ENCODE measurements at regions of chr1 and their contacts with region 1.

Region 1: GRCh38 chr1:210407207-210407886 is 78.6 kb downstream of the HHAT start:
- DNase-seq: peak; percentile 62
- ATAC-seq: peak; percentile 68
- H3K4me3 Mint-ChIP-seq: no peak overlapping the region
- H3K27ac Mint-ChIP-seq: no peak overlapping the region
- H3K4me1 Mint-ChIP-seq: peaks cover 4% of the 10 kb centered on the region
- H3K27me3 Mint-ChIP-seq: no peaks in the 10 kb centered on the region
- CTCF ChIP-seq: peak; percentile 98

Region 2: DNA sequence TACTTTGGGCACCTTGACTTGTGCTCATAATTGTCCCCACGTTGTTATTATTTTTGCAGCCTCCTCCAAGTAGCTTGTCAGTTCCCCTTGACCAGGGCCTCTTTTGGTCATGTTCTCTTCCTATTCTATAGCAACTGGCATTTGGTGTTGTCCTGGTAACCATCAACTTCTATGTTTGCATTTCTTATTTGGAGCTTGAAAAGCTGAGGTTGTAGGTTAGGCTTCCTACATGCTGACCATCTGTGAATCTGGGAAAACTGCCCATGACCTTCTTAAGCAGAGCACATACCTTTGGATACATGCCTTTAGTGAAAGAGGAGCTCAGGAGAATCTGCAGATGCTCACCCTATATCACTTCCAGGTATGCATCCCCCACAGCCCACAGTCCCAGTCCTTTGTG is 82.1 kb after region 1 on chr1:
- CTCF ChIA-PET with region 1: no interaction called
- POLR2A ChIA-PET with region 1: no interaction called
- intact Hi-C with region 1: no loop called
- DNase-seq: no peak
- ATAC-seq: no peak
- H3K4me3 Mint-ChIP-seq: no peak overlapping the region
- H3K27ac Mint-ChIP-seq: no peak overlapping the region
- H3K4me1 Mint-ChIP-seq: no peaks in the 10 kb centered on the region
- H3K27me3 Mint-ChIP-seq: no peaks in the 10 kb centered on the region
- CTCF ChIP-seq: no peak

Region 3: GRCh38 chr1:210584439-210585113 is 177.2 kb after region 1 on chr1:
- CTCF ChIA-PET with region 1: no interaction called
- POLR2A ChIA-PET with region 1: no interaction called
- intact Hi-C with region 1: loop called (anchors 5 kb)
- DNase-seq: peak; percentile 34
- ATAC-seq: peak; percentile 37
- H3K4me3 Mint-ChIP-seq: no peak overlapping the region
- H3K27ac Mint-ChIP-seq: no peak overlapping the region
- H3K4me1 Mint-ChIP-seq: peaks cover 10% of the 10 kb centered on the region
- H3K27me3 Mint-ChIP-seq: no peaks in the 10 kb centered on the region
- CTCF ChIP-seq: no peak

Region 4: DNA sequence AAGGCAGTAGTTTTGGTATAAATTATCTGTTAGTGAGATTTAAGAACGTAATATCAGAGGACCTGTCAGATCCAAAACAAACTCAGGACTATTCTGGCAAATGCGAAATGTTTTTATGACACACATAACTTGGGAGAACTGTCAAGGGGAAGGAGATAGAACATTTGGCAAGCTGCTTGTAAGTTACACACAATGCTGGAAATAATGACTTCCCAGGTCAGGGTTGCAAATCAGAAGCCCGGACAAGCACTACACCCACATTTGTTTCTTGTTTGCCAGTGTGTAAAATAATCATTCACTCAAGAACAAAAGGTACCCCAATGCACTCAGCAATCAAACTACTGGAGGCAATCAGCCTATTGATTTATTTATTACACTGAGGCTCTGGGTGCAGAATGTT is 371.9 kb after region 1 on chr1:
- CTCF ChIA-PET with region 1: no interaction called
- POLR2A ChIA-PET with region 1: no interaction called
- intact Hi-C with region 1: no loop called
- DNase-seq: no peak
- ATAC-seq: no peak
- H3K4me3 Mint-ChIP-seq: no peak overlapping the region
- H3K27ac Mint-ChIP-seq: no peak overlapping the region
- H3K4me1 Mint-ChIP-seq: no peaks in the 10 kb centered on the region
- H3K27me3 Mint-ChIP-seq: peaks cover 2% of the 10 kb centered on the region
- CTCF ChIP-seq: no peak

Region 5: DNA sequence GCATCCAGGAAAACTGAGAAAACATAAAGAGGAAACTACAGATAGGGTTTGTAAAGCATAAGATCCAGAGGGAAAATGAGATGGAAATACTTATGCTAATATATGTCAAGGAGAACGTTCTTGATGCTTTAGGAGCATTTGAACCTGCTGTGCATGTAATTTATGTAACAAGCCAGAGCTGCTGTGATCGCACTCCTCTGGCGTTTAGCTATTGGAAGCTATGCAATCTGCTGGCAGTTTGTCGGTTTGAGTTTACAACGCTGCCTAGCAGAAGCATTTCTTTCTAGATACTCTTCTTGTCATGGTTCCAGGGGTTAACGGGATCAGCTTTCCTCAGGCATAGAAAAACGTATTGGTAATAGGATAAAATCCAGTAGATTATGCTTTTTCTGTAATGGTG is 543.9 kb after region 1 on chr1:
- CTCF ChIA-PET with region 1: no interaction called
- POLR2A ChIA-PET with region 1: no interaction called
- intact Hi-C with region 1: loop called (anchors 2 kb)
- DNase-seq: no peak
- ATAC-seq: no peak
- H3K4me3 Mint-ChIP-seq: no peak overlapping the region
- H3K27ac Mint-ChIP-seq: no peak overlapping the region
- H3K4me1 Mint-ChIP-seq: no peaks in the 10 kb centered on the region
- H3K27me3 Mint-ChIP-seq: no peaks in the 10 kb centered on the region
- CTCF ChIP-seq: no peak

Region 6: GRCh38 chr1:211133836-211134669 is 726.7 kb after region 1 on chr1 and contains the start of gene KCNH1:
- CTCF ChIA-PET with region 1: interaction called, 9 read pairs
- POLR2A ChIA-PET with region 1: no interaction called
- intact Hi-C with region 1: loop called (anchors 1 kb)
- DNase-seq: peak; percentile 59
- ATAC-seq: peak; percentile 87
- H3K4me3 Mint-ChIP-seq: peak within 1 kb of the TSS; percentile 67
- H3K27ac Mint-ChIP-seq: no peak within 1 kb of the TSS
- H3K4me1 Mint-ChIP-seq: peaks cover 7% of the 10 kb centered on the region
- H3K27me3 Mint-ChIP-seq: peaks cover 55% of the 10 kb centered on the region
- CTCF ChIP-seq: no peak
- total RNA-seq, gene KCNH1: not detected in 2 replicates

Region 7: GRCh38 chr1:211352985-211353515 is 945.7 kb after region 1 on chr1:
- CTCF ChIA-PET with region 1: no interaction called
- POLR2A ChIA-PET with region 1: no interaction called
- intact Hi-C with region 1: loop called (anchors 1 kb)
- DNase-seq: no peak
- ATAC-seq: peak; percentile 83
- H3K4me3 Mint-ChIP-seq: peak overlapping the region; percentile 55
- H3K27ac Mint-ChIP-seq: peak overlapping the region; percentile 94
- H3K4me1 Mint-ChIP-seq: peaks cover 60% of the 10 kb centered on the region
- H3K27me3 Mint-ChIP-seq: no peaks in the 10 kb centered on the region
- CTCF ChIP-seq: no peak

Region 8: GRCh38 chr1:211476200-211476849 is 1069.0 kb after region 1 on chr1:
- CTCF ChIA-PET with region 1: no interaction called
- POLR2A ChIA-PET with region 1: no interaction called
- intact Hi-C with region 1: loop called (anchors 1 kb)
- DNase-seq: peak; percentile 39
- ATAC-seq: peak; percentile 72
- H3K4me3 Mint-ChIP-seq: no peak overlapping the region
- H3K27ac Mint-ChIP-seq: no peak overlapping the region
- H3K4me1 Mint-ChIP-seq: peaks cover 2% of the 10 kb centered on the region
- H3K27me3 Mint-ChIP-seq: peaks cover 27% of the 10 kb centered on the region
- CTCF ChIP-seq: peak; percentile 56

Region 9: GRCh38 chr1:211654838-211655787 is 1247.8 kb after region 1 on chr1:
- CTCF ChIA-PET with region 1: no interaction called
- POLR2A ChIA-PET with region 1: no interaction called
- intact Hi-C with region 1: loop called (anchors 1 kb)
- DNase-seq: peak; percentile 70
- ATAC-seq: peak; percentile 91
- H3K4me3 Mint-ChIP-seq: no peak overlapping the region
- H3K27ac Mint-ChIP-seq: no peak overlapping the region
- H3K4me1 Mint-ChIP-seq: peaks cover 4% of the 10 kb centered on the region
- H3K27me3 Mint-ChIP-seq: no peaks in the 10 kb centered on the region
- CTCF ChIP-seq: peak; percentile 33

Measured in activated B cell treated with CpG ODN at 0.5 μM for 24 hours (primary cell).